ENCODE measurements at regions of chr14 and their contacts with region 1.

Region 1: DNA sequence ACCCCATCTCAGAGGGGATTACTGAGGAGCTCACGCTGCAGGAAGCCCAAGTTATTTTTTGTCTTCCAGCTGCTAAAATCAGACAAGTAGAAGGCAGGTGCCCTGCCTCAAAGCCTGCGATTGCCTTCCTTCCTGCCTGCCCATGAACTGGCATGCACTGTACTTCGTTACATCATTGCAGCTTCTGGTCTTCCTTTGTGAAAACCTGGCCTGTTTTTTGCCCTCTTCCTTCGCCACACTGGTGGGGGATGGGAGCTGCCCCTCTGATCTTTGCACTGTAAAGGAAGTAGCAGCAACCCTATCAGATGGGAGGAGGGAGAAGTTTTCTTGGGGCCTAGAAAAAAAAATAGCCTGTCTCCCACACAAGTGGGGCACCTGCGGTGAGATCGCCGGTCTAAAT is 1098.7 kb downstream of the BCL11B start:
- DNase-seq: peak; percentile 71
- ATAC-seq: no peak
- H3K4me3 Mint-ChIP-seq: peak overlapping the region; percentile 57
- H3K27ac Mint-ChIP-seq: peak overlapping the region; percentile 93
- H3K4me1 Mint-ChIP-seq: peaks cover 97% of the 10 kb centered on the region
- H3K27me3 Mint-ChIP-seq: no peaks in the 10 kb centered on the region
- CTCF ChIP-seq: no peak

Region 2: GRCh38 chr14:98099527-98099926 is 73.8 kb before region 1 on chr14:
- CTCF ChIA-PET with region 1: no interaction called
- POLR2A ChIA-PET with region 1: no interaction called
- intact Hi-C with region 1: no loop called
- DNase-seq: no peak
- ATAC-seq: peak; percentile 80
- H3K4me3 Mint-ChIP-seq: no peak overlapping the region
- H3K27ac Mint-ChIP-seq: peak overlapping the region; percentile 51
- H3K4me1 Mint-ChIP-seq: peaks cover 44% of the 10 kb centered on the region
- H3K27me3 Mint-ChIP-seq: no peaks in the 10 kb centered on the region
- CTCF ChIP-seq: no peak

Region 3: GRCh38 chr14:98129753-98130152 is 43.6 kb before region 1 on chr14:
- CTCF ChIA-PET with region 1: no interaction called
- POLR2A ChIA-PET with region 1: no interaction called
- intact Hi-C with region 1: no loop called
- DNase-seq: no peak
- ATAC-seq: no peak
- H3K4me3 Mint-ChIP-seq: no peak overlapping the region
- H3K27ac Mint-ChIP-seq: no peak overlapping the region
- H3K4me1 Mint-ChIP-seq: peaks cover 20% of the 10 kb centered on the region
- H3K27me3 Mint-ChIP-seq: no peaks in the 10 kb centered on the region
- CTCF ChIP-seq: no peak

Region 4: GRCh38 chr14:98144964-98145363 is 28.3 kb before region 1 on chr14:
- CTCF ChIA-PET with region 1: interaction called, 91 read pairs
- POLR2A ChIA-PET with region 1: interaction called, 7 read pairs
- intact Hi-C with region 1: loop called (anchors 5 kb)
- DNase-seq: no peak
- ATAC-seq: no peak
- H3K4me3 Mint-ChIP-seq: no peak overlapping the region
- H3K27ac Mint-ChIP-seq: peak overlapping the region; percentile 63
- H3K4me1 Mint-ChIP-seq: peaks cover 64% of the 10 kb centered on the region
- H3K27me3 Mint-ChIP-seq: no peaks in the 10 kb centered on the region
- CTCF ChIP-seq: no peak

Region 5: DNA sequence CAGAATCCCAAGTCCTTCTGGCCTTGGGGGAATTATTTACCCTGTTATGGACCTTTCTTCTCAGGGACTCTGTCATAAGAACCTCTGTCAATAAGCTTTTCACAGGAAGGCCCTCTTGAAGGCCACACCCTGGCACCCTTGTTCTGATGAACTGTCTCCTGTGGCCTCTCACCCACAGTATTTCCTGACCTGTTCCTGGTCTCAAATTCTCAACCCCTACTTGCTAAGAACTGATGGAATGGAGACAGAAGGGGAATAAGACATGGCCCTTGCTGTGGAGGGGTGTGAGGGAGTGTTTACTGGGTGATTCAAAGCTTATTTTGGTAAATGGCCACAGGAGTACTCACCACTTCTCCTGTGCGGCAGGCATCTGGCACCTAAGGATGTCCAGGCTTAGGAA is 15.8 kb after region 1 on chr14:
- CTCF ChIA-PET with region 1: interaction called, 6 read pairs
- POLR2A ChIA-PET with region 1: interaction called, 66 read pairs
- intact Hi-C with region 1: no loop called
- DNase-seq: peak; percentile 64
- ATAC-seq: peak; percentile 57
- H3K4me3 Mint-ChIP-seq: peak overlapping the region; percentile 74
- H3K27ac Mint-ChIP-seq: peak overlapping the region; percentile 99
- H3K4me1 Mint-ChIP-seq: peaks cover 97% of the 10 kb centered on the region
- H3K27me3 Mint-ChIP-seq: no peaks in the 10 kb centered on the region
- CTCF ChIP-seq: no peak

Region 6: DNA sequence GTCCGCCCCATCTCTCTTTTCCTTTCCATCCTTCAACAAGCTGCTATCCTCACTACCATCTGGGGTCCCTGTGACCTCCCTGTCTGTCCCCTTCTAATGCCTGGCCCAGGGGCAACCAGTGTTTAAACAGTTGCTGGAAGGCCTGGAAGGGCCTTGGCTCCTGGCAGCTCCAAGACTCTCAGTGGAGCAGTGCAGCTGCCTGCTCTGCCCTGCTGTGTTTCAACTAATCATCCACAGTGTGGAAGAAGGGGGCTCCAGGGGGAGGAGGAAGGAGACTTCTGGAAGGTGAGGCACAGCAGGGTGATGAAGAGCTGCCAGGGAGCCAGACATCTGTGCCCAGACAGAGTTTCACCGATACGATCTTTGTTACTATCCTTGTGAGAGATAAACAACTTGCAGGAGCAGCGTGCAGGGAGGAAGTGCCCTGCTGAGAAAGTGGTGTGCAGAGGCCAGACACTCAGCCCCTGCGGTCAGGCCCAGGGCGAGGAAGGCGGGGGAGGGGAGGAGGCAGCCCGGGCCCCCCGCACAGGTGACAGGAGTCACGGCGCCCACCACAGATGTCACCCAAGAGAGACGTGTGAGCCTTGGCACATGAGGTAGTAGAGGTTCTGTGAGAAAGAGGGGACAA is 36.9 kb after region 1 on chr14:
- CTCF ChIA-PET with region 1: interaction called, 3 read pairs
- POLR2A ChIA-PET with region 1: interaction called, 13 read pairs
- intact Hi-C with region 1: loop called (anchors 5 kb)
- DNase-seq: peak; percentile 81
- ATAC-seq: peak; percentile 72
- H3K4me3 Mint-ChIP-seq: peak overlapping the region; percentile 74
- H3K27ac Mint-ChIP-seq: peak overlapping the region; percentile 94
- H3K4me1 Mint-ChIP-seq: peaks cover 83% of the 10 kb centered on the region
- H3K27me3 Mint-ChIP-seq: no peaks in the 10 kb centered on the region
- CTCF ChIP-seq: no peak

Region 7: GRCh38 chr14:98656418-98656817 is 483.1 kb after region 1 on chr14:
- CTCF ChIA-PET with region 1: no interaction called
- POLR2A ChIA-PET with region 1: no interaction called
- intact Hi-C with region 1: no loop called
- DNase-seq: no peak
- ATAC-seq: no peak
- H3K4me3 Mint-ChIP-seq: no peak overlapping the region
- H3K27ac Mint-ChIP-seq: no peak overlapping the region
- H3K4me1 Mint-ChIP-seq: peaks cover 2% of the 10 kb centered on the region
- H3K27me3 Mint-ChIP-seq: no peaks in the 10 kb centered on the region
- CTCF ChIP-seq: no peak

Measured in activated CD8-positive, alpha-beta T cell treated with anti-CD3 and anti-CD28 coated beads for 36 hours (primary cell).